HCT116 (cell line): ENCODE measurements at regions of chr20 and their contacts with region 1.

Region 1: GRCh38 chr20:19784511-19785172 is 26.6 kb downstream of the RIN2 start:
- DNase-seq: peak; percentile 77
- ATAC-seq: peak; percentile 91
- H3K4me3 ChIP-seq: no peak overlapping the region
- H3K27ac ChIP-seq: no peak overlapping the region
- H3K4me1 ChIP-seq: peaks cover 11 to 17% of the 10 kb centered on the region in 2 experiments
- H3K27me3 ChIP-seq: no peaks in the 10 kb centered on the region
- CTCF ChIP-seq: peak; percentile 69 to 83 (median 74); a peak in 5 of 6 replicates
- POLR2A ChIP-seq: no peak
- RAD21 ChIP-seq: peak; percentile 88

Region 2: GRCh38 chr20:19889011-19889953 is 104.6 kb after region 1 on chr20:
- CTCF ChIA-PET with region 1: no interaction called
- POLR2A ChIA-PET with region 1: no interaction called
- RAD21 ChIA-PET with region 1: no interaction called
- intact Hi-C with region 1: loop called (anchors 10 kb)
- DNase-seq: no peak
- ATAC-seq: no peak
- H3K4me3 ChIP-seq: no peak overlapping the region
- H3K27ac ChIP-seq: no peak overlapping the region
- H3K4me1 ChIP-seq: peaks cover 0 to 16% of the 10 kb centered on the region in 2 experiments; a peak in 3 of 4 replicates
- H3K27me3 ChIP-seq: no peaks in the 10 kb centered on the region
- CTCF ChIP-seq: no peak
- POLR2A ChIP-seq: no peak
- RAD21 ChIP-seq: no peak

Region 3: DNA sequence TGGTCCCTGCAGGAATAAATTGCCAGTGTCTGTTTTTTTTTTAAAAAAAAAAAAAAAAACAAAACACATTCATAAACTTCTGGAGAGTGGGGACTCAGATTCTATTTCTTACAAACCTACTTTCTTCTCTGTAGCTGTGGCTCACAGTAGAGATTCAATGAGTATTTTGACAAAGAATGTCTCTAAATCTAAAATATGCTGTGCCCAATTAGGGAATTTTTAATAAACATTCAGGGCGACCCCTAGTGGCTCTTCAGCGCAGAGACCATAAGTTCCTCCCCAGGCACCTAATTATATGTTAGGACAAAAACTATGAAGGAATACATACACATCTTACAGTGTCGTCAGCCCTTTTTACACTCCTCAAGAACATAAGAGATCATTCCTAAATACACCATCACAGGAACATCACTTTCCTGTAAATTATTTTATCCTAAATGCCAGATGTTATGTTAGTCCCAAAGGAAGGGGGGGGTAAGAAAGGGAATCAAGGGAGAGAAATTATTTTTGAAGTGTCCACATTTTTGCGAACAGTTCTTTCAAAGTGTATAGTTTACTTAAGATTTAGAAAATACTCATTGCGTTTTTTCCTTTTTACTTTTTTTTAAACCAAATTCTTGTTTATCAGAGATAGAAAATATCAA is 210.7 kb after region 1 on chr20:
- CTCF ChIA-PET with region 1: interaction called, 5 read pairs
- POLR2A ChIA-PET with region 1: interaction called, 3 read pairs
- RAD21 ChIA-PET with region 1: no interaction called
- intact Hi-C with region 1: loop called (anchors 1 kb)
- DNase-seq: peak; percentile 21
- ATAC-seq: peak; percentile 26; the same call in 1 of the 2 replicates
- H3K4me3 ChIP-seq: no peak overlapping the region
- H3K27ac ChIP-seq: no peak overlapping the region
- H3K4me1 ChIP-seq: peaks cover 32 to 44% of the 10 kb centered on the region in 2 experiments
- H3K27me3 ChIP-seq: no peaks in the 10 kb centered on the region; the same call in 1 of the 2 replicates
- CTCF ChIP-seq: peak; percentile 68 to 91 (median 74)
- POLR2A ChIP-seq: no peak
- RAD21 ChIP-seq: peak; percentile 81

Region 4: GRCh38 chr20:20017001-20017843 is 232.6 kb after region 1 on chr20 and contains the start of gene NAA20:
- CTCF ChIA-PET with region 1: no interaction called
- POLR2A ChIA-PET with region 1: no interaction called
- RAD21 ChIA-PET with region 1: no interaction called
- intact Hi-C with region 1: loop called (anchors 5 kb)
- DNase-seq: peak; percentile 91
- ATAC-seq: peak; percentile 95
- H3K4me3 ChIP-seq: peak within 1 kb of the TSS; percentile 89 to 98
- H3K27ac ChIP-seq: peak within 1 kb of the TSS; percentile 77
- H3K4me1 ChIP-seq: peaks cover 22 to 30% of the 10 kb centered on the region in 2 experiments
- H3K27me3 ChIP-seq: no peaks in the 10 kb centered on the region
- CTCF ChIP-seq: peak in 2 of 3 experiments; percentile 46 to 68; a peak in 4 of 6 replicates
- POLR2A ChIP-seq: peak; percentile 54
- RAD21 ChIP-seq: peak; percentile 40
- total RNA-seq, gene NAA20: 71.5 TPM

Region 5: GRCh38 chr20:20237093-20237959 is 452.7 kb after region 1 on chr20:
- CTCF ChIA-PET with region 1: no interaction called
- POLR2A ChIA-PET with region 1: no interaction called
- RAD21 ChIA-PET with region 1: no interaction called
- intact Hi-C with region 1: loop called (anchors 10 kb)
- DNase-seq: peak; percentile 28
- ATAC-seq: peak; percentile 96
- H3K4me3 ChIP-seq: no peak overlapping the region
- H3K27ac ChIP-seq: no peak overlapping the region
- H3K4me1 ChIP-seq: no peaks in the 10 kb centered on the region
- H3K27me3 ChIP-seq: no peaks in the 10 kb centered on the region
- CTCF ChIP-seq: peak; percentile 27 to 80 (median 77); a peak in 5 of 6 replicates
- POLR2A ChIP-seq: no peak
- RAD21 ChIP-seq: peak; percentile 54

Region 6: DNA sequence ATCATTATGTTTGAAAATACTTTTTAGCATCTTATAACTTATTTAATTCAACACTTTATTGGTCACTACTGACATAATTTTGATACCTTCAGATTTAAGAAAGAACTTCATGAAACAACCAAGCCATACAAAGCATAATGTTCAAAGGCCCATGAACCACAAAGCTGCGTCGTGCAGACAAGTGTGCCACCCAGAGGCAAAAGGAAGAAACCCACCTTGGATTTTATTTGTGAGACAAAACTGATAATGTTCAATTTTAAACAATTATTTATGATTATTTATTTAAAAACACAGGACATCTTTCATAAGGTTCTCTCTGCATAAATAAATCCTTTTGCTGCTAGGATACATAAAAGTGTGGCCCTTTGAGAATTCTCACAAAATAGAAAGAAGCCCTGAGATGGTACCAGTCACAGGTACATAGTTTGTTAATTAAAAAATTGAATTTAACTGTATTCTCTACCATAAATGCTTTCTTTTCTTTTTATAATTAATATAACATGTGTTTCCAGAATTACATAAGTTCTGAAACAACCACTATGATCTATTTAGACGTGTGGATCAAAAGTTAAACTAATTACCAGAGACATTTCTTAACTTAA is 784.1 kb after region 1 on chr20:
- CTCF ChIA-PET with region 1: no interaction called
- POLR2A ChIA-PET with region 1: no interaction called
- RAD21 ChIA-PET with region 1: no interaction called
- intact Hi-C with region 1: loop called (anchors 10 kb)
- DNase-seq: no peak
- ATAC-seq: no peak
- H3K4me3 ChIP-seq: no peak overlapping the region
- H3K27ac ChIP-seq: no peak overlapping the region
- H3K4me1 ChIP-seq: no peaks in the 10 kb centered on the region
- H3K27me3 ChIP-seq: no peaks in the 10 kb centered on the region
- CTCF ChIP-seq: peak; percentile 61 to 75 (median 69)
- POLR2A ChIP-seq: no peak
- RAD21 ChIP-seq: peak; percentile 81